ENCODE measurements at regions of chrX and their contacts with region 1.

Region 1: DNA sequence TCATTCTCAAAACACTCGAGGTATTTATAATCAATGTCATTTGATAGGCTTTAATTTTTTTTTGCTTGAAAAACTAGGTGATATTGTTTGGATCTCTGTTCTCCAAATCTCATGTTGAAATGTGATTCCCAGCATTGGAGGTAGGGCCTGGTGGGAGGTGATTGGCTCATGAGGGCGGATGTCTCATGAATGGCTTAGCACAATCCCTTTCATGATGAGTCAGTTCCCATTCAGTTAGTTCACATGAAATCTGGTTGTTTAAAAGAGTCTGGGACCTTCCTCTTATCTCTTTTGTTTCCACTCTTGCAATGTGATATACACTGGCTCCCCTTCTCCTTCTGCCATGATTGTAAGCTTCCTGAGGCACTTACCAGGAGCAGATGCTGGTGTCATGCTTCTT is 638.7 kb downstream of the DMD start:
- DNase-seq: no peak
- H3K4me3 ChIP-seq: no peak overlapping the region
- H3K27ac ChIP-seq: no peak overlapping the region
- H3K4me1 ChIP-seq: no peaks in the 10 kb centered on the region
- H3K27me3 ChIP-seq: no peaks in the 10 kb centered on the region
- CTCF ChIP-seq: no peak

Region 2: GRCh38 chrX:32397562-32398216 is 175.0 kb before region 1 on chrX:
- intact Hi-C with region 1: no loop called
- DNase-seq: no peak
- H3K4me3 ChIP-seq: no peak overlapping the region
- H3K27ac ChIP-seq: no peak overlapping the region
- H3K4me1 ChIP-seq: no peaks in the 10 kb centered on the region
- H3K27me3 ChIP-seq: no peaks in the 10 kb centered on the region
- CTCF ChIP-seq: no peak

Region 3: DNA sequence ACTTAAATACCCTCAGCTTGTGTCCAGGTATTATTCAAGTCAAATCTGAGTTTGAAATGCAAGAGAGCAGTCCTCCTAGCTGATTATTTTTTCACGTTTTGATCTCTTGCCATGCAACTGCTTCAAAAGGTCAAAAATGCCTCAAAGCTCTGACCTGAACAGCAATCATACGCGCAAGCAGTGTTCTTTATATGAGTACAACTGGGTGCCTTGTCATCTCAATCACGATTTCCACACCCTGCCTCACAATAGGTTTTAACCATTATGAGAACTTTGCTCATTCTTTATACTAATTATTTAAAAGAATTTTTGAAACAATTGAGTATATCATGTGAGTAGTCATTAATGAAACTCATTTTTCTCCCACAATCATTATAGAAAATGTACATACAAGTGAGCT is 10.4 kb before region 1 on chrX:
- intact Hi-C with region 1: loop called (anchors 1 kb)
- DNase-seq: no peak
- H3K4me3 ChIP-seq: no peak overlapping the region
- H3K27ac ChIP-seq: no peak overlapping the region
- H3K4me1 ChIP-seq: no peaks in the 10 kb centered on the region
- H3K27me3 ChIP-seq: no peaks in the 10 kb centered on the region
- CTCF ChIP-seq: no peak

Measured in ascending aorta (tissue), 2 donors.